AG04449 (cell line): ENCODE measurements at regions of chr3 and their contacts with region 1.

Region 1: GRCh38 chr3:112653209-112653871 is 12.4 kb upstream of the CCDC80 start:
- DNase-seq: peak; percentile 98
- H3K4me3 ChIP-seq: no peak overlapping the region
- CTCF ChIP-seq: no peak

Region 2: GRCh38 chr3:112676659-112677234 is 23.4 kb after region 1 on chr3:
- CTCF ChIA-PET with region 1: interaction called, 4 read pairs
- POLR2A ChIA-PET with region 1: interaction called, 18 read pairs
- DNase-seq: peak; percentile 95
- H3K4me3 ChIP-seq: no peak overlapping the region
- CTCF ChIP-seq: no peak

Region 3: DNA sequence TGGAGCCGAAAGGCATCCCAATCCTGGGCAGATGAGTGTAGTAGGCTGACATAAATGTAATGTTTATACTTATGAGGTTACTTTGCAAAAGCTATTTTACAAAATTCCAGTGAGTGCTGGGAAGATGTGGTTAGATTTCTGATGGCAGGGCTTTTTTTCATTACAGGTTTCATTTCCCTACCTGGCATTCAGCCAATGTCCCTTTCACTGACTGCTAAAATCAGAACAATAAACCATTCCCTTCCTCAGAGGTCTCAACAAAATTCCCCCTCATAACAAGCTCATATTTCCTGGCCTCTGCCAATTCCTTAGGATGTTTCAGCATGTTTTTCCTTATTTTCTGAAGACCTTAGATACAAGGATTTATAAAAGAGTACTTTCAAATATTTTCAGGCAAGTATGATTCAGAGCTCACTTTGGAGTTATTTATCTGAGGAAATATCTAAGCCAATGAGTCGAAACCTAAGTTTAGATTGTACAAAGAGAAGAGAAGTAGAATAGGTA is 28.5 kb after region 1 on chr3:
- CTCF ChIA-PET with region 1: interaction called, 3 read pairs
- POLR2A ChIA-PET with region 1: interaction called, 16 read pairs
- DNase-seq: peak; percentile 67
- H3K4me3 ChIP-seq: no peak overlapping the region
- CTCF ChIP-seq: no peak

Region 4: DNA sequence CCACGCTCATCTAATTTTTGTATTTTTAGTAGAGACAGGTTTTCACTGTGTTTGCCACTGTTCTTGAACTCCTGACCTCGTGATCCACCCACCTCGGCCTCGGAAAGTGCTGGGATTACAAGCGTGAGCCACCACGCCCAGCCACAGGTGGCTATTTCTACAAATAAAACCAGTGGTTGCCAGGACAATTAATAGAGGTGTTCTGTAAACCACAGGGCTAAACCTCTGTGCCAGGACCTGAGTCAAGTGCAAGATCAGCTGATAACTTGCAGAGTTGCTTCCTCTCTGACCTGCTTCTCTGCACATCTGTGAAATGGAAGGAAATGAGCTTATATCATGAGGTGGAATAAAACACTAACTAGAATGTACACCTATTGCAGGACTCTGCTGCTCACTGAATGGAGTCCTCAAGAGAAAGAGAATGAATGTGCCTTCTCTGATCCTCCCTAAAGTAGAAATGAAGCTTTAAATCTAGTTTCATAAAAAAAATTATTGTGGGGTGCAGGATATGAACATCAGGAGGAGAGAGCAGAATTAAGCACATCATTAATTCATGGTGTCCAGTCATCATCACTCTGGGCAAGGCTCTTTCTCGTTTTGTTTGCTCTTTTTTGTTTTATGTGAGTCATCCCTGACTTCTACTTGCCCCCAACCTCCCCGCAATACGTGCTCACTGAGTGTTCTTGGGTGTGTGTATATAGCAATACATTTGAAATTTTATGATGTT is 120.7 kb after region 1 on chr3:
- CTCF ChIA-PET with region 1: interaction called, 7 read pairs
- POLR2A ChIA-PET with region 1: interaction called, 16 read pairs
- DNase-seq: peak; percentile 69
- H3K4me3 ChIP-seq: no peak overlapping the region
- CTCF ChIP-seq: no peak

Region 5: GRCh38 chr3:112814266-112814665 is 160.9 kb after region 1 on chr3:
- CTCF ChIA-PET with region 1: interaction called, 223 read pairs
- POLR2A ChIA-PET with region 1: interaction called, 6 read pairs
- DNase-seq: peak; percentile 69
- H3K4me3 ChIP-seq: no peak overlapping the region
- CTCF ChIP-seq: peak; percentile 56